GM10248 (cell line): ENCODE measurements at regions of chr14 and their contacts with region 1.

Region 1: DNA sequence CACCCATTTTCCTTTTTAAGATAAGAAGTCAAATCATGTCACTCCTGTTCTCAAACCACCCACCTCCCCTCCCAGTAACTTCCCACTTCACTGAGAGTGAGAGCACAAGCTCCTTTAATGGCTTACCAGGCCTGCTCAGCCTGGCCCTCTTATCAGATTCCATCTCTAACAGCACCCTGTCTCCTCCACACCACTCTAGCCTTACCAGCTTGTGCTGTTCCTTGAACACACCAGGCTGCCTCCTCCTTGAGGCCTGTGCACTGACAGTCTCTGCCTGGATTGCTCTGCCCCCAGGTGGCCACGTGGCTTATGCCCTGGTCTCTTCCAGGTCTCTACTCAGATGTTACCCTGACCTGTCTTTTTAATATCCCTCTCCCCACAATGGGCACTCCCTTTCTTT is 40.1 kb upstream of the EVL start:
- DNase-seq: peak; percentile 53
- CTCF ChIP-seq: peak; percentile 59

Region 2: DNA sequence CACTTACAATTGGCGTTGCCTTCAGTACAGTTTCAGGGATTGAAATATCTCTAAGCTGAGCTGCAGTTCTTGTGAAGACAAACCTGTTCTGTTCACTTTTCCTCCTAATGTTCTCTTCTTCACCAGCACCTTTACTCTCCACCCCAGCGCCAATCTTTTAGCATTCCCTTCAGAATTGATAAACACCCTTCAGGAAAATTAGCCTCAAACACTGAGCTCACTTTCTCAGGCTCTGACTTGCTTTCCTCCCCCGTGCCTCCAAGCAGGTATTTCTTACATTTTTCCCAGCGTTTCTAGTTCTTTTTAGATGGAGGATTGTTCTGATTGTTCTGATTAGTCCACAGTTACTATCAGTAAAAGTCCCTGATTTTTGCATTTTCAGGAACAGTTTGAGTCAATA is 48.4 kb before region 1 on chr14:
- CTCF ChIA-PET with region 1: interaction called, 50 read pairs
- POLR2A ChIA-PET with region 1: no interaction called
- DNase-seq: no peak
- CTCF ChIP-seq: no peak

Region 3: DNA sequence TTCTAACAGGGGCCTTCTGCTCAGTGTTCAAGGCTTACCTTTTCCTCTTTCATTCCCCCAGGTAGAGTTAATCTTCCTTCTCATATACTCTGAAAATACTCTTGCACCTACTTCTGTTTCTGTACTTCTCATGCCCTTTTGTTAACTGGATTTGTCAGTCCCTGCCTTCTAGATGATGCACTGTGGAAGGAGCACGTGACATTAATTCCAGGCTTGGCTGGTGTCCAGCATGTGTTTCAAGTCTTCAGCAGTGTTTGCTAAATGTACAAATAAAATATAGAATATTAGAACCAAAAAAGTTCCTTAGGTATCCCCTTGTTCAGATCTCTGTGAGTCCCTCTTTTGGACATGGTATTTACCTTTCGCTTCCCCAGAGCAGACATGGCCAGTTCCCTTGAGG is 12.2 kb after region 1 on chr14:
- CTCF ChIA-PET with region 1: interaction called, 39 read pairs
- POLR2A ChIA-PET with region 1: no interaction called
- DNase-seq: no peak
- CTCF ChIP-seq: no peak